ENCODE measurements at regions of chr1 and their contacts with region 1.

Region 1: GRCh38 chr1:67570473-67571143 is 114.4 kb upstream of the GADD45A start:
- DNase-seq: no peak
- H3K4me3 ChIP-seq: no peak overlapping the region
- H3K27ac ChIP-seq: no peak overlapping the region
- H3K4me1 ChIP-seq: peaks cover 7% of the 10 kb centered on the region
- H3K27me3 ChIP-seq: no peaks in the 10 kb centered on the region
- CTCF ChIP-seq: no peak

Region 2: GRCh38 chr1:67404212-67404620 is 166.4 kb before region 1 on chr1:
- intact Hi-C with region 1: no loop called
- DNase-seq: no peak
- H3K4me3 ChIP-seq: no peak overlapping the region
- H3K27ac ChIP-seq: no peak overlapping the region
- H3K4me1 ChIP-seq: no peaks in the 10 kb centered on the region
- H3K27me3 ChIP-seq: no peaks in the 10 kb centered on the region
- CTCF ChIP-seq: no peak

Region 3: DNA sequence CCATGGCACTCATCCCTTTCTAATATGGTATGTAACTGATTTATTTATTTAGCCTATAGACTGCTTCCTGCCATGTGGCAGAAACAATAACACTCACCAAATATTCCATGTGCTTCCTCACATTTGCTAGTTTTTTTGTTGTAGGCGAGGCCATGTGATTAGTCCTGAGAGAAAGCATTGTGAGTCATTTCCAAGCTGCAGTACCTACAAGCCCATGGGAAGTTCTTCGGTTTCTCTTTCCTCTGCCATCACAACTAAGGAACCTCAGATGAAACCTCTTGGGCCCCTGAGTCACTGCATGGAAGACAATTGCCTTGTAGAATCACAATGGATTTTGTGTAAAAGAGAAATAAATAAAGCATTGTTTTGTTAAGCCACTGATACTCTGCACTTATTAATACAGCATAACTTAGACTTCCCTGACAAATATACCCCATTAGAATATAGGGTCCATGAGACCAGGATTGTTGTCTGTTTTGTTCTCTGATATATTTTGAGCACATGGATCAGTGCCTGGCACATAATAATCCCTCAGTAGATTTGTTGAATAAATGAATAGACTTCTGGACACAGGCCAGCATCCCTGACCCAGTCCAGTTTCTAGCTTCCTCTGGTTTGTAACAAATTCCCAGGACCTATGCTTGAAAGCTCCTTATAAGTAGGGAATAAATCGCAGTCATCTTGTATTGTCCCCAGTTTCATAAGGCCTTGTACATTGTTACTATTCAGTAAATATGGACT is 56.1 kb after region 1 on chr1:
- intact Hi-C with region 1: loop called (anchors 10 kb)
- DNase-seq: no peak
- H3K4me3 ChIP-seq: no peak overlapping the region
- H3K27ac ChIP-seq: no peak overlapping the region
- H3K4me1 ChIP-seq: no peaks in the 10 kb centered on the region
- H3K27me3 ChIP-seq: no peaks in the 10 kb centered on the region
- CTCF ChIP-seq: no peak

Region 4: DNA sequence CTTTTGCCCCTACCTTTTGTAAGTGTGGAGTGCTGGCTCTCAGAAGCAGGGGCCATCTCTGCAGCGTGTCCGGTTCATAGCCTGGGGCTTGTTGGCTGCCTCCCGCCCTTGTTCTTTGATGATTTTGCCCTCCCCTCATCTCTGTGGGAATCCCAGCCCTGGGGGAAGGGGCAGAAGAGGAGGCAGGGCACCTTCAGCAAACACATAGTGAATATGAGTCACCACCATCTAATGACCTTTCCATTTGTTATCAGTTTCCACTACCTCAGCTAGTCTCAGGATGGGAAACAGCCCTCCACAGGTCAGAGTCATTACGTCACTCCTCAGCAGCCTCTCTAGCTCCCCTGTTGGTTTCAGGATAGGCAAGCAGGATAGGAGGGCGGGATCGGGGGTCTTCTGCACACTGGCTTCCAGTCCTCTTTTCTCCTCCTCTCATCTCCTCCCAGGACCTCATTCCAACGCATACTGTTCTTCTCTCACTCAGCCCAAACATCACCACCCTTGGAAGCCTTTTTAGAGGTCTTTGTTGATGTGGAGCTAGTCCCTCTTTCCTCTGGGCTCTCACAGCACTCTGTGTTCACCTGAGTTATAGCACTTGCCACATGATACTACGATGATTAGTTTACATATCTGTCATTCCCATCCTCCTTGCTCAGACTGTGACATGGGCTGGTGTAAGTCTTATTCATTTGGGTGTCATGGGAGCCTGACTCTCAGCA is 130.2 kb after region 1 on chr1:
- intact Hi-C with region 1: no loop called
- DNase-seq: no peak
- H3K4me3 ChIP-seq: no peak overlapping the region
- H3K27ac ChIP-seq: no peak overlapping the region
- H3K4me1 ChIP-seq: no peaks in the 10 kb centered on the region
- H3K27me3 ChIP-seq: no peaks in the 10 kb centered on the region
- CTCF ChIP-seq: no peak